ENCODE measurements at regions of chr3 and their contacts with region 1.

Region 1: DNA sequence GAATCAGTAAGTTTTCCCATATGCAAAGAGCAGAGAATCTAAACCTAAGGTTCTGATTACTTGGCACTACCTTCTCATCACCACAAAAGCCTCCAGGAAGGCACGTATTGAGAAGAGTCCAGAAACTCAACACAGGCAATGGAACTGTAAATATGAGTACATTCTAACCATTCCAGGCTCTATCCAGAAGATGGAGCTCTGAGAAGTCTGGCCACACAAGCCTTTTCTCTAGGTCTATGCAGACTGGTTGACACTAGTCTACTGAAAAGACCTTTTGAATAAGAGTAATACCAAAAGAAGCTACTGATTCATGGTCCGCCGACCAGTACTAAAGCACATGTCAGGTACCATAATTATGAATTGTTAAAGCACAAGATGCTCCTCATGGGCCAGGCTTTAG is 12.2 kb upstream of the NCKIPSD start:
- DNase-seq: peak; percentile 31
- ATAC-seq: peak; percentile 27
- H3K4me3 ChIP-seq: no peak overlapping the region
- H3K27ac ChIP-seq: no peak overlapping the region
- H3K4me1 ChIP-seq: peaks cover 22% of the 10 kb centered on the region; the same call in 1 of the 2 replicates
- H3K27me3 ChIP-seq: no peaks in the 10 kb centered on the region
- CTCF ChIP-seq: peak; percentile 44; the same call in 1 of the 2 replicates

Region 2: DNA sequence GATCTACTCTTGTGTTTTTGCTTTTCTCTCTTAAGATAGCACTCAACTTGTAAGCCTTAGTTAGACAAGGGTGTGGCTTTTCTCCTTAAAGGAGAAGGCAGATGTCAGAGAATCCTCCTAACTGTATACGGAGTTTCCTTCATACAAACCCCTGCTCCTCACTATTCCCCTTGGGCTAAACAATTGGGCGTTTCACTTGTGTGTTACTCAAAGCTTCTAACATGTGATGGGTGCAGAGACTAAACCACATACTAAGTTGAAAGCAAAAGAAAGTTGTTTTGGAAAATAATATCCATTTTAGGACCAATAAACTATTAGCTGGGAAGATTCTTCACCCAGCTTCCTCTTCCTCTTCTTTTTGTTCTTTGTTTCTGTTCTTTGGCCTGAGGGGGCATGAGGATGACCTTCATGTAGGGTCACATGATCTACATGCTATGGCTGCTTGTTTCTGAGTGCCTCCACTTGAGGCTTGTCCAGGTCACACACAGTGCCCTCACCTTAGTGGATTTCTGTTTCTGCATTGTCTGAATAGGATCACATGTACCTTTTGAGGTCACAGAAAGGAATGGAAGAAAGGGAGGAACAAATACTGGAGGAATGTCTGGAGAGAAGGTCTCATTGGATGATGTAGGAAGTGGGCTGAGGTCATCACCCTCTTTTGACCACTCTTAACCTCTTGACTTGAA is 379.0 kb before region 1 on chr3:
- CTCF ChIA-PET with region 1: no interaction called
- POLR2A ChIA-PET with region 1: no interaction called
- intact Hi-C with region 1: no loop called
- DNase-seq: no peak
- ATAC-seq: no peak
- H3K4me3 ChIP-seq: no peak overlapping the region
- H3K27ac ChIP-seq: no peak overlapping the region
- H3K4me1 ChIP-seq: no peaks in the 10 kb centered on the region
- H3K27me3 ChIP-seq: peaks cover 7% of the 10 kb centered on the region; the same call in 1 of the 2 replicates
- CTCF ChIP-seq: no peak

Region 3: GRCh38 chr3:48739955-48740823 is 42.2 kb after region 1 on chr3:
- CTCF ChIA-PET with region 1: no interaction called
- POLR2A ChIA-PET with region 1: no interaction called
- intact Hi-C with region 1: loop called (anchors 2 kb)
- DNase-seq: peak; percentile 86
- ATAC-seq: peak; percentile 96
- H3K4me3 ChIP-seq: peak overlapping the region; percentile 31; the same call in 1 of the 2 replicates
- H3K27ac ChIP-seq: peak overlapping the region; percentile 47
- H3K4me1 ChIP-seq: peaks cover 12% of the 10 kb centered on the region
- H3K27me3 ChIP-seq: no peaks in the 10 kb centered on the region
- CTCF ChIP-seq: peak; percentile 91